Mammary epithelial cell (primary cell): ENCODE measurements at regions of chr12 and their contacts with region 1.

Region 1: GRCh38 chr12:105107494-105108371 is at the start of gene WASHC4:
- DNase-seq: peak; percentile 94
- H3K4me3 ChIP-seq: peak within 1 kb of the TSS; percentile 80 to 99 (median 96)
- H3K27ac ChIP-seq: peak within 1 kb of the TSS; percentile 79
- H3K4me1 ChIP-seq: peaks cover 15% of the 10 kb centered on the region
- H3K27me3 ChIP-seq: no peaks in the 10 kb centered on the region
- CTCF ChIP-seq: peak in 1 of 2 donors; percentile 2
- total RNA-seq, gene WASHC4: 48.4 to 75.2 TPM

Region 2: DNA sequence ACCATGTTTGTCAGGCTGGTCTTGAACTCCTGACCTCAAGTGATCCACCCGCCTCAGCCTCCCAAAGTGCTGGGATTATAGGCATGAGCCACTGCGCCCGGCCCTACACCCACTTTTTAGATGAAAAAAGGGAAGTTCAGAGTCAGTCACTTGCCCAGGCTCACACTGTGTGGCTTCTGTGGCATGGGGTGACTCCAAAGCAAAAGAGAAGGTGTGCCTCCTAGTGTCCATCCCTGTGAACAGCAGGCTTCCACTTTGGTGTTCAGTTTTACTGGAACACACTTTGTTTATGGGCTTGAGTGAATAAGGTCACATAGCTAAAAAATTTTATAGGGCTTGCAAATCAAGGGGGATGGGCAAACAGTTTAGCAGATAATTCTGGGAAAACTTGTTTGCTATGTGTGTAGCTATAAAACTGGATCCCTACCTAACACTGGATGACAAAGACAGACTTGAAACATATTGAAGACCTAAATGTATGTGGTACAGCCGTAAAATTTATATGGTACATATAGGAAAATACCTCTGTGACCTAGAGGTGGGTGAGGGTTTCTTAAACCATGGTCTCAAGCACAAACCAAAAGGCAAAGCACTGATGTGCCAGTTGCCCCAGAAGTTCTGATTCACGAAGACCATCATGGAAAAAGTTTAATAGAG is 749.3 kb before region 1 on chr12:
- CTCF ChIA-PET with region 1: no interaction called
- dilution Hi-C with region 1: no loop called
- in situ Hi-C with region 1: no loop called
- intact Hi-C with region 1: loop called (anchors 10 kb)
- DNase-seq: peak; percentile 40
- H3K4me3 ChIP-seq: no peak overlapping the region
- H3K27ac ChIP-seq: no peak overlapping the region
- H3K4me1 ChIP-seq: no peaks in the 10 kb centered on the region
- H3K27me3 ChIP-seq: no peaks in the 10 kb centered on the region
- CTCF ChIP-seq: peak; percentile 86 to 88

Region 3: DNA sequence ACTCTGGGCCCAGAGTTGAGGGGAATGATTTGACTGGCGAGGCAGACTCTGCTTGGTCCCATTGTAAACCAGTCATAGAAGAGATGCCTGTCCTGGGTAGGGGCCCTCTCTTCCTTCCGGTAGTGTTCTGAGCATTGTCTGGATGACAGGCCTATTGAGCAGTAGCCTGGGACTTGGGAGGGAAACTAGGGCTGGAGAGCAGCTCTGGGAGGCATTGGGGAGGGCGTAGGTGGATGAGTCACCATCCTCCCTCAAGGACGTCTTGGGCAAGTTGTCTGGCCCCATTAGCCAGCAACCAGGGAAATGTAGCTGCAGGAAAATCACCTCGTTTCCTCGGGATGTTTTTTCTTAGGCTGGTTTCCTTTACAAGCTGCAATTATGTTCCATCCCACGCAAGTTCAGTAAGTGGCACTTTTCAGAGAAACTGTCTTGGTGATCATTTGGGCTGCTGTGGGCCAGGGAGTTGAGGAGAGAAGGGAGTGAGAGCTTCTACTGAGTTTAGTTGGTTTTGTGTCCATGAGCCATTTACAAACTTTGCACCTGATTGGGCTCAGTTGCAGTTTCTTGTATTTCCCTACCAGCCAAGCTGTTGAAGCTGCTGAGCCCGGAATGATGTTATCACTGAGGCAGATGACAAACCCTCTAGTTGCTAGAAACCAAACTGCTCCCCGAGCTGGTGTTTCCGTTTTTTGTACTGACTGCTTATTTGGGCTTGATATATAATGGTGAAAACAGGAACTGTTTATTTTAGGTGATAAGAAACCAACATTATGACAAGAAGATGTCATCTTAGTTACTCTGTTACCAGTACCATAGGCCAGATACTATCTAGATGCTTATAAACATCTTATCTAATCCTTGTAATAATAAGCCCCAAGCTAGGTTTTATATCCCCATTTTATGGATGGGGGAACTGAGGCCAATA is 503.4 kb before region 1 on chr12:
- CTCF ChIA-PET with region 1: no interaction called
- dilution Hi-C with region 1: no loop called
- in situ Hi-C with region 1: no loop called
- intact Hi-C with region 1: loop called (anchors 10 kb)
- DNase-seq: peak; percentile 94
- H3K4me3 ChIP-seq: peak overlapping the region in 2 of 3 experiments; percentile 2 to 28
- H3K27ac ChIP-seq: peak overlapping the region; percentile 84
- H3K4me1 ChIP-seq: peaks cover 48% of the 10 kb centered on the region
- H3K27me3 ChIP-seq: no peaks in the 10 kb centered on the region
- CTCF ChIP-seq: no peak

Region 4: DNA sequence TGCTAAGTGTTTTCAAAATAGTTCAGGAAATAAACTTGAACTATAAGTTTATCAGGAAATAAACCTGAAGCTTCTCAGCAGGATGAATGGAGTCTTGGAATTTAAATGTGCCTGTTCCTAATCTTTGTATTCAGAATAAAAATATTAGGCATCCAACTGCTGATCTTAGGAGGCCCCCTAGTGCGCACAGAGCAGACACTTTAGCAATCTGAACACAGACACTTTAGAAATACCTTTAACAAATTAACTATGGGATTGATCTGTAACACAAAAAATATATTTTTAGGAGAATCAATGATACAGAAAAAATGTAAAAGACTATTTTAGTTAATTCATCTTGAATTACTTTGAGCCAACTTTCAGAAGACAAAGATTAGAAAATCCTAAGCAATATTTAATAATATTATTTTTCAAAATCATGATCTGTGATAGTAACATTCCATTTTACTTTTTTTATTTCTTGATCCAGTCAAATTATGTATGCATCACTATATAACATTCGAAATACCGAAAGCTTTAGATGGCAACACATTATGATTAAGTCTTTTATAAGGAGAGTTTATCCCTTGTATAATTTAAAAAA is 230.5 kb before region 1 on chr12:
- CTCF ChIA-PET with region 1: no interaction called
- dilution Hi-C with region 1: no loop called
- in situ Hi-C with region 1: no loop called
- intact Hi-C with region 1: loop called (anchors 5 kb)
- DNase-seq: peak; percentile 19
- H3K4me3 ChIP-seq: no peak overlapping the region
- H3K27ac ChIP-seq: no peak overlapping the region
- H3K4me1 ChIP-seq: no peaks in the 10 kb centered on the region
- H3K27me3 ChIP-seq: no peaks in the 10 kb centered on the region
- CTCF ChIP-seq: peak; percentile 56 to 74

Region 5: GRCh38 chr12:105072888-105073488 is 34.7 kb before region 1 on chr12:
- CTCF ChIA-PET with region 1: no interaction called
- dilution Hi-C with region 1: no loop called
- in situ Hi-C with region 1: no loop called
- intact Hi-C with region 1: loop called (anchors 5 kb)
- DNase-seq: no peak
- H3K4me3 ChIP-seq: no peak overlapping the region
- H3K27ac ChIP-seq: no peak overlapping the region
- H3K4me1 ChIP-seq: peaks cover 27% of the 10 kb centered on the region
- H3K27me3 ChIP-seq: no peaks in the 10 kb centered on the region
- CTCF ChIP-seq: no peak

Region 6: DNA sequence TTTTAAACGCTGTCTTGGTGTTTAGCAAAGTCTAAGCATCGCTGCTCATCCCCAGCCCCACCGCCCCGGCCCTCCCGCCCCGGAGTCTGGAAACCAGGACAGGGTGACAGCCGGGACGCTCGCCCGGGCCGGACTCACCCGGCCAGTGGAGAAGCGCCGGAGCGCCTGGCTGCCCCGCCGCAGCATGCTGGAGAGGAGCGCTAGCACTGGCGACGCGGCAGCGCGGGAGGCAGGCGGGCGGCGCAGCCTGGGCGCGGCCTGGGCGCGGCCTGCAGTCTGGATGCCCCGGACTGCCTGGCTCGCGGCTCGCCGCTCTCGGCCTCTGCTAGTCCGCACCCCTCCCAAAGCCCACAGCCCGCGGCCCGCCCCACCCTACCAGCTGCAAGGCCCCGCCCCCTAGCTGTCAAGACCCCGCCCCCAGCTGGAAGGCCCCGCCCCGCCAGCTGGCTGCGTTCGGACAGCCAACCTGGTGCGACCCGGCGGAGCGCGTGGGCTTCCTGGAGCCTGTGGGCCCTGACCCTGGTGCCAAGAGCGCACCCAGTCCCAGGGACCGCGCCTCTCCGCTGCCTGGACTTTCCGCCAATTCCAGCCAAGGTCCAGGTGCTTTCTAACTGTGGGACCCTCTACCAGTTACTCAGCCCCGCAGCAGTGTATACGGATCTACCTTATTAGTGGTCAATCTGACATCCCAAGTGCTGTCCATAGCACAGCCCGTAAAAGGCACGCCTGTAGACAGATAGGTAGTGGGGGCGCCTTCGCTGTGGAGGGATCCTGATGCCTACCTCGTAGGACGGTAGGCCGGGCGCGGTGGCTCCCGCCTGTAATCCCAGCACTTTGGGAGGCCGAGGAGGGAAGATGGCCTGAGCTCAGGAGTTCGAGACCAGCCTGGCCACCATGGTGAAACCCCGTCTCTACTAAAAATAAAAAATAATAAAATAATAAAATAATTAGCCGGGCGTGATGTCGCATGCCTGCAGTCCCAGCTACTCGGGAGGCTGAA is 23.2 kb before region 1 on chr12 and contains the start of gene ALDH1L2:
- CTCF ChIA-PET with region 1: interaction called, 4 read pairs
- dilution Hi-C with region 1: no loop called
- in situ Hi-C with region 1: no loop called
- intact Hi-C with region 1: loop called (anchors 1 kb)
- DNase-seq: peak; percentile 81
- H3K4me3 ChIP-seq: peak within 1 kb of the TSS; percentile 68 to 84 (median 74)
- H3K27ac ChIP-seq: peak within 1 kb of the TSS; percentile 66
- H3K4me1 ChIP-seq: peaks cover 12% of the 10 kb centered on the region
- H3K27me3 ChIP-seq: no peaks in the 10 kb centered on the region
- CTCF ChIP-seq: no peak
- total RNA-seq, gene ALDH1L2: 61.7 to 92.1 TPM